A549 (cell line): ENCODE measurements at regions of chr1 and their contacts with region 1.

Region 1: GRCh38 chr1:6423321-6423999 is 1.1 kb upstream of the ESPN start:
- DNase-seq: peak in 1 of 2 experiments; percentile 52
- ATAC-seq: peak; percentile 60 to 78
- H3K4me3 ChIP-seq: peak overlapping the region; percentile 35; the same call in 2 of the 3 replicates
- H3K27ac ChIP-seq: peak overlapping the region in 1 of 2 experiments; percentile 38; a peak in 1 of 6 replicates
- H3K4me1 ChIP-seq: peaks cover 19% of the 10 kb centered on the region
- CTCF ChIP-seq: peak; percentile 54
- EP300 ChIP-seq: no peak
- POLR2A ChIP-seq: no peak
- RAD21 ChIP-seq: peak in 1 of 2 experiments; percentile 21; a peak in 2 of 5 replicates

Region 2: GRCh38 chr1:6259491-6260425 is 163.7 kb before region 1 on chr1:
- CTCF ChIA-PET with region 1: no interaction called
- POLR2A ChIA-PET with region 1: no interaction called
- DNase-seq: peak; percentile 68 to 70
- ATAC-seq: peak; percentile 37 to 71
- H3K4me3 ChIP-seq: peak overlapping the region; percentile 57
- H3K27ac ChIP-seq: peak overlapping the region; percentile 56 to 82; a peak in 5 of 6 replicates
- H3K4me1 ChIP-seq: peaks cover 3% of the 10 kb centered on the region; the same call in 1 of the 3 replicates
- CTCF ChIP-seq: no peak
- EP300 ChIP-seq: no peak
- POLR2A ChIP-seq: no peak
- RAD21 ChIP-seq: no peak

Region 3: GRCh38 chr1:6401673-6402072 is 21.8 kb before region 1 on chr1:
- CTCF ChIA-PET with region 1: interaction called, 42 read pairs
- POLR2A ChIA-PET with region 1: no interaction called
- DNase-seq: no peak
- ATAC-seq: no peak
- H3K4me3 ChIP-seq: no peak overlapping the region
- H3K27ac ChIP-seq: no peak overlapping the region
- H3K4me1 ChIP-seq: no peaks in the 10 kb centered on the region
- CTCF ChIP-seq: no peak
- EP300 ChIP-seq: no peak
- POLR2A ChIP-seq: no peak
- RAD21 ChIP-seq: no peak

Region 4: DNA sequence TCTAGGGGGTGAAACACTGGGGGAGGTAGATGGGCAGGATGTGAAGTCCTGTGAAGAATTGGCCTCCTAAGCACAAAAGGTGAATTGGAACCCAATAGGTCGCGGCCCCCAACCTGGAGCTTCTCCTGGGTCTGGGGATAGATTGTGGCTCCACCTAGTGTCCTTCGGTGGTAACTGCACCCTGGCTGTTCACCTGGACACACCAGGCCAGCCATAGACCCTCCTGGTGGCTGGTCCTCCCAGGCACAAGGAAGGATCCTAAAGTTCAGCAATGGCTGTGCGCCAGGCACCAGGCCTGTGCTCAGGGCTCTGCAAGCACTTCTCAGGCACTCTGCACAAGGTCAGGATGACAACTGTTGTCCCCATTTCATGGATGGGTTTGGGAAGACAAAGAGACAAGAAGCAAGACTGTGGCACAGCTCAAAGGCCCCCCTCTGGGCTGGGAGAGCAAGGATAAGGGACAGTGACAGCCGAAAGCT is 14.6 kb after region 1 on chr1:
- CTCF ChIA-PET with region 1: interaction called, 96 read pairs
- POLR2A ChIA-PET with region 1: no interaction called
- DNase-seq: peak; percentile 73 to 76
- ATAC-seq: peak; percentile 74 to 83
- H3K4me3 ChIP-seq: no peak overlapping the region
- H3K27ac ChIP-seq: no peak overlapping the region
- H3K4me1 ChIP-seq: peaks cover 5% of the 10 kb centered on the region; the same call in 1 of the 3 replicates
- CTCF ChIP-seq: peak; percentile 56
- EP300 ChIP-seq: no peak
- POLR2A ChIP-seq: no peak
- RAD21 ChIP-seq: peak; percentile 50 to 51; a peak in 4 of 5 replicates

Region 5: DNA sequence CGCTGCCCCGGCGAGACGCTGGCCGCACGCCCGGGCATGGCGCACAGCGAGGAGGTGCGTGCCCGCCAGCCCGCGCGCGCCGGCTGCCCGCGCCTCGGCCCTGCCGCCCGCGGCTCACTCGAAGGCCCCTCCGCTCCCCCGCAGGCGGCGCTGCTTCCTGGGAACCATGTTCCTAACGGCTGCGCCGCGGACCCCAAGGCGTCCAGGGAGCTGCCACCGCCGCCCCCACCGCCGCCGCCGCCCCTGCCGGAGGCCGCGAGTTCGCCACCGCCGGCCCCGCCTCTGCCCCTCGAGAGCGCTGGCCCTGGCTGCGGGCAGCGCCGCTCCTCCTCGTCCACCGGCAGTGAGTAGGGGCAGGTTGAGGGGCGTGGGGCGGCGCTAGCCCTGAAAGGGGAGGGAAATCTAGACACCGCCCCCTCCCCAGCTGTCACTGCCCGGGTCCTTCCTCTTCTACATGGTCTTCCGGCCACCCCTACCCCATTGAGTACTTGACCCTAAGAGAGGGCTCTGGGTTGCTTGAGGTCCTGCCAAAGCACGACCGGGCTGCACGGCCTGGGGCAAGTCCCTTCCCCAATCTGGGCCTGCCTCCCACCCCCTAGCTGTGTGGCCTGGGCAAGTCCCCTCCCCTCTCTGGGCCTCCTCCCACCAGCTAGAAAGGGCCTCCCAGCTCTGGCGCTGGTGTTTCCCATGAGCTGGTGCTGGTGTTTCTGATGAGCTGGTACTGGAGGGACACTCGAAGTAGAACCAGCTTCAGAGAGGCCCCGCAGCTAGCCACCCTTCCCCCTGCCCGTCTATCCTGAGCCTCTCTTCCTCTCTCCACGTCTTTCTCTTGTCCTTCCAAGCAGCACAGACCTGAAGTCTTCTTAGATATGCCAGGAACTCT is 25.5 kb after region 1 on chr1:
- CTCF ChIA-PET with region 1: interaction called, 10 read pairs
- POLR2A ChIA-PET with region 1: no interaction called
- DNase-seq: no peak
- ATAC-seq: peak; percentile 11 to 38; a peak in 4 of 6 replicates
- H3K4me3 ChIP-seq: peak overlapping the region; percentile 19; the same call in 2 of the 3 replicates
- H3K27ac ChIP-seq: peak overlapping the region in 1 of 2 experiments; percentile 57; a peak in 2 of 6 replicates
- H3K4me1 ChIP-seq: 0 out of 3 replicates have a peak, but pooled peaks cover 2% of the 10 kb centered on the region
- CTCF ChIP-seq: no peak
- EP300 ChIP-seq: no peak
- POLR2A ChIP-seq: no peak
- RAD21 ChIP-seq: no peak